ENCODE measurements at regions of chr17 and their contacts with region 1.

Region 1: GRCh38 chr17:6555331-6556120 is 829 bp downstream of the PITPNM3 start:
- DNase-seq: peak; percentile 50 to 53
- H3K4me3 ChIP-seq: peak overlapping the region; percentile 69
- H3K27ac ChIP-seq: no peak overlapping the region
- H3K4me1 ChIP-seq: peaks cover 56% of the 10 kb centered on the region
- H3K27me3 ChIP-seq: no peaks in the 10 kb centered on the region
- CTCF ChIP-seq: no peak

Region 2: DNA sequence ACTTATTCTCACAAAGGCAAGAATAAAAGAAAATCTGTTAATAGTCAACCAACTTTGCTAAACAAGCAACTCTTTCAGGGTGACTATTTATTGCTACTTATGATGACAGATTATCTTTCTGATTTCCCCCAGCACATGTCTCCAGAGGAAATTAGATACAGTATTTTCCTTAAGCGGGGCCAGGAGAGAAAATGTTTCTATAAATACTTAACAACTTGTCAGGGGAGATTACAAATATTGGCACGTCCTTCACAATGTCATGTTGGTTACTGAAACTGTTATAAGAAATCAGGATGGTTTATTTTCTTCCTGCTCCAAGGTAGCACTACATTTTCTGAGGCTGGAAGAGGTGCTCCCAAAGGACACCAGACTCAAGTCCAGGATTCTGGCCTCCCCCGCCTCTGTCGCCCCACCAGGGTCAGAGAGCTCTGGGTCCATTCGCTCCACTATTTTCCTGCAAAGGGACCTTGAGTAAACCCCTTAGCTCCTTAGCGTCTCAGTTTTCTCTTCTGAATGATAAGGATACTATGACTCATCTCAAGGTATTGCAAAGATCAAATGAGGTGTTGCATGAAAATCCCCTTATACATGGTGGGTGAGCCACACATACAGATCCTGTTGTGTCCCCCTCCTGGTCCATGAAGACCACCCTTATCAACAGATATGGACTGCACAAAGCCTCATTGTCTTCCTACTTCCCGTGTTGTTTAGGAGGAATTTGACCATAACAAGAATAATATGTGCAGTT is 690.4 kb before region 1 on chr17:
- CTCF ChIA-PET with region 1: no interaction called
- POLR2A ChIA-PET with region 1: interaction called, 14 read pairs
- intact Hi-C with region 1: no loop called
- DNase-seq: no peak
- H3K4me3 ChIP-seq: no peak overlapping the region
- H3K27ac ChIP-seq: no peak overlapping the region
- H3K4me1 ChIP-seq: no peaks in the 10 kb centered on the region
- H3K27me3 ChIP-seq: peaks cover 73% of the 10 kb centered on the region
- CTCF ChIP-seq: no peak

Region 3: GRCh38 chr17:6473128-6473767 is 82.3 kb before region 1 on chr17:
- CTCF ChIA-PET with region 1: interaction called, 5 read pairs
- POLR2A ChIA-PET with region 1: interaction called, 4 read pairs
- intact Hi-C with region 1: loop called (anchors 1 kb)
- DNase-seq: peak; percentile 51 to 87
- H3K4me3 ChIP-seq: no peak overlapping the region
- H3K27ac ChIP-seq: no peak overlapping the region
- H3K4me1 ChIP-seq: peaks cover 32% of the 10 kb centered on the region
- H3K27me3 ChIP-seq: no peaks in the 10 kb centered on the region
- CTCF ChIP-seq: peak; percentile 99

Region 4: GRCh38 chr17:6507535-6507934 is 48.0 kb before region 1 on chr17:
- CTCF ChIA-PET with region 1: no interaction called
- POLR2A ChIA-PET with region 1: interaction called, 7 read pairs
- intact Hi-C with region 1: loop called (anchors 1 kb)
- DNase-seq: peak; percentile 84 to 88
- H3K4me3 ChIP-seq: no peak overlapping the region
- H3K27ac ChIP-seq: peak overlapping the region; percentile 86
- H3K4me1 ChIP-seq: peaks cover 55% of the 10 kb centered on the region
- H3K27me3 ChIP-seq: no peaks in the 10 kb centered on the region
- CTCF ChIP-seq: no peak

Region 5: GRCh38 chr17:6577683-6578263 is 22.2 kb after region 1 on chr17:
- CTCF ChIA-PET with region 1: no interaction called
- POLR2A ChIA-PET with region 1: no interaction called
- intact Hi-C with region 1: loop called (anchors 2 kb)
- DNase-seq: peak in 1 of 2 experiments; percentile 65
- H3K4me3 ChIP-seq: no peak overlapping the region
- H3K27ac ChIP-seq: no peak overlapping the region
- H3K4me1 ChIP-seq: no peaks in the 10 kb centered on the region
- H3K27me3 ChIP-seq: no peaks in the 10 kb centered on the region
- CTCF ChIP-seq: no peak

Region 6: DNA sequence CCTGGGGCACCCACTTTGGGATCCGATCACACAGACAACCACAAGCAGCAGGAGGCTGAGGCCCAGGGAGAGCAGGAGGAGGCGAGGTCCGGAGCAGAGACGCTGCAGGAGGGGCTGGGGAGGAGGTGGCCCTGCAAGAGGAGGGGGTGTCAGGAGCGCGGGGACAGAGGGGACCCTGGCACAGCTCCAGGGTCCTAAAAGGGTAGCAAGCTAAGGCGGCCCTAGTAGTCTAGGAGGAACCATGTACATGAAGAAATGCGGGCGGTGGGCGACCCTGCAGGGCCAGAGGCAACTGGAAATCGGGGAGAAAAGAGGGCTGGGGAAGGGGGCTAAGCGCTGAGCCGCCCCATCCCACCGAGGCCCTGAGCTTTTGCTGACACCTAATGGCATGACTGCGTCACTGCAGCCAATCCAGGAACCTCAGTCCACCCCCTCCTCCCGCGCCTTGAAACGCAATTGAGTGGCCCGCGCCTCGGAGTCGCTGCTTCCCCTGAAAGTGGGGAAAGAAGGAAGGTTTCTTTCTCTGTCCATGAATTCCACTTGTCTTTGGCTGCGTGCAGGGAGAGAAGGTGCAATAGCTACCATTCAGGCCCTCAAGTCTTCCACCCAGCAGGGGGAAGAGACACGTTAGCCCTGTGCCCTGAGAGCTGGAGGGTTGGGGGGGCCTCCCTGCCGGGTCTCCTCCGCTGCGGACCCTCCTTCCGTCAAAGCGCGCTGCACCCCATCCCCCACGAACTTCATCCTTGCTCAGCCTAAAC is 621.8 kb after region 1 on chr17:
- CTCF ChIA-PET with region 1: no interaction called
- POLR2A ChIA-PET with region 1: no interaction called
- intact Hi-C with region 1: no loop called
- DNase-seq: peak; percentile 39 to 75
- H3K4me3 ChIP-seq: peak overlapping the region; percentile 76
- H3K27ac ChIP-seq: no peak overlapping the region
- H3K4me1 ChIP-seq: peaks cover 4% of the 10 kb centered on the region
- H3K27me3 ChIP-seq: no peaks in the 10 kb centered on the region
- CTCF ChIP-seq: peak; percentile 92

Measured in PC-9 (cell line).